ENCODE measurements at regions of chr2 and their contacts with region 1.

Region 1: DNA sequence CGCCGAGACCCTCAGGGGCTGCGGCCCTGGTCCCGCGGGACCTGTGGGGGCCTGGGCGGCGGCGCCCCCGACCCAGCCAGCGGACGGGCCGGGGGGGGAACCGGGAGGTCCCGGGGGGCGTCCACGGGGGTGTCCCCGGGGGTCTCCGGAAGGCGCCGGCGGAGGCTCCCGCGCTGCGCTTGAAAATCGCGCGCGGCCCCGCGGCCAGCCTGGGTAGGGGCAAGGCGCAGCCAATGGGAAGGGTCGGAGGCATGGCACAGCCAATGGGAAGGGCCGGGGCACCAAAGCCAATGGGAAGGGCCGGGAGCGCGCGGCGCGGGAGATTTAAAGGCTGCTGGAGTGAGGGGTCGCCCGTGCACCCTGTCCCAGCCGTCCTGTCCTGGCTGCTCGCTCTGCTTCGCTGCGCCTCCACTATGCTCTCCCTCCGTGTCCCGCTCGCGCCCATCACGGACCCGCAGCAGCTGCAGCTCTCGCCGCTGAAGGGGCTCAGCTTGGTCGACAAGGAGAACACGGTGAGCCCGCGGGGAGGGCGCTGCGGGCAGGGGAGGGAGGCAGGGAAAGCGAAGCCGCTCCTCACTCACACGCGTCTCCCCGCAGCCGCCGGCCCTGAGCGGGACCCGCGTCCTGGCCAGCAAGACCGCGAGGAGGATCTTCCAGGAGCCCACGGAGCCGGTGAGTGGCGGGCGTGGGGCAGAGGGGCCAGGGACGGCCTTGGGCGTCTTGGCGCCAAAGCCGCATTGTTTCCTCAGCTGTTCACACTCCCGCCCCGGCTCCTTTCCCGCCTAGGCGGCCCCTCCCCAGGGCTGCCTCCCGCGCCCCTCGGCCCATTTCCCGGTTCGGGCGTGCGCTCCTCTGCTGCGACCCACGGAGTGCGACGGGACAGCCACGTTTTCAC is at the start of gene RRM2:
- DNase-seq: peak; percentile 91
- H3K4me3 ChIP-seq: peak within 1 kb of the TSS; percentile 33 to 48
- H3K27ac ChIP-seq: no peak within 1 kb of the TSS
- H3K4me1 ChIP-seq: peaks cover 11% of the 10 kb centered on the region
- H3K27me3 ChIP-seq: no peaks in the 10 kb centered on the region
- CTCF ChIP-seq: no peak
- POLR2A ChIP-seq: no peak
- total RNA-seq, gene RRM2: 1.9 to 6.1 TPM

Region 2: GRCh38 chr2:10302479-10303180 is 180.0 kb after region 1 on chr2 and contains the start of gene HPCAL1:
- intact Hi-C with region 1: loop called (anchors 5 kb)
- DNase-seq: peak; percentile 86
- H3K4me3 ChIP-seq: peak within 1 kb of the TSS; percentile 81 to 85
- H3K27ac ChIP-seq: peak within 1 kb of the TSS; percentile 61 to 68
- H3K4me1 ChIP-seq: peaks cover 3% of the 10 kb centered on the region
- H3K27me3 ChIP-seq: no peaks in the 10 kb centered on the region
- CTCF ChIP-seq: peak; percentile 26 to 76 (median 58)
- POLR2A ChIP-seq: peak; percentile 96
- total RNA-seq, gene HPCAL1: 22.5 to 203 TPM

Region 3: GRCh38 chr2:10408649-10409579 is 286.3 kb after region 1 on chr2:
- intact Hi-C with region 1: loop called (anchors 5 kb)
- DNase-seq: peak; percentile 84
- H3K4me3 ChIP-seq: no peak overlapping the region
- H3K27ac ChIP-seq: peak overlapping the region; percentile 38 to 47
- H3K4me1 ChIP-seq: peaks cover 2% of the 10 kb centered on the region
- H3K27me3 ChIP-seq: no peaks in the 10 kb centered on the region
- CTCF ChIP-seq: peak; percentile 87 to 97 (median 92)
- POLR2A ChIP-seq: no peak

Region 4: GRCh38 chr2:10434886-10435819 is 312.5 kb after region 1 on chr2:
- intact Hi-C with region 1: loop called (anchors 2 kb)
- DNase-seq: peak; percentile 33
- H3K4me3 ChIP-seq: no peak overlapping the region
- H3K27ac ChIP-seq: no peak overlapping the region
- H3K4me1 ChIP-seq: no peaks in the 10 kb centered on the region
- H3K27me3 ChIP-seq: no peaks in the 10 kb centered on the region
- CTCF ChIP-seq: peak; percentile 83 to 96 (median 94)
- POLR2A ChIP-seq: no peak

Region 5: GRCh38 chr2:10659898-10660568 is 537.4 kb after region 1 on chr2:
- intact Hi-C with region 1: loop called (anchors 5 kb)
- DNase-seq: peak; percentile 27
- H3K4me3 ChIP-seq: no peak overlapping the region
- H3K27ac ChIP-seq: no peak overlapping the region
- H3K4me1 ChIP-seq: no peaks in the 10 kb centered on the region
- H3K27me3 ChIP-seq: no peaks in the 10 kb centered on the region
- CTCF ChIP-seq: peak in 3 of 4 experiments; percentile 46 to 61 (median 59)
- POLR2A ChIP-seq: no peak

Measured in prostate gland (tissue), 2 donors.